ENCODE measurements at regions of chr10 and their contacts with region 1.

Region 1: GRCh38 chr10:48444266-48444665 is 137.8 kb downstream of the MAPK8 start:
- DNase-seq: peak; percentile 51
- ATAC-seq: no peak
- H3K4me3 ChIP-seq: no peak overlapping the region
- H3K27ac ChIP-seq: no peak overlapping the region
- H3K4me1 ChIP-seq: peaks cover 11% of the 10 kb centered on the region
- H3K27me3 ChIP-seq: no peaks in the 10 kb centered on the region
- CTCF ChIP-seq: peak; percentile 33
- POLR2A ChIP-seq: no peak
- RAD21 ChIP-seq: peak; percentile 30; the same call in 1 of the 2 replicates

Region 2: GRCh38 chr10:48309711-48310226 is 134.5 kb before region 1 on chr10:
- CTCF ChIA-PET with region 1: no interaction called
- POLR2A ChIA-PET with region 1: no interaction called
- dilution Hi-C with region 1: no loop called
- in situ Hi-C with region 1: no loop called
- intact Hi-C with region 1: loop called (anchors 5 kb)
- DNase-seq: peak; percentile 64
- ATAC-seq: no peak
- H3K4me3 ChIP-seq: no peak overlapping the region
- H3K27ac ChIP-seq: no peak overlapping the region
- H3K4me1 ChIP-seq: peaks cover 11% of the 10 kb centered on the region
- H3K27me3 ChIP-seq: no peaks in the 10 kb centered on the region
- CTCF ChIP-seq: no peak
- POLR2A ChIP-seq: no peak
- RAD21 ChIP-seq: no peak

Measured in IMR-90 (cell line).